ENCODE measurements at regions of chr11 and their contacts with region 1.

Region 1: GRCh38 chr11:8263769-8264410 is at the start of gene LMO1:
- DNase-seq: peak; percentile 20 to 60 (median 60)
- H3K4me3 ChIP-seq: peak within 1 kb of the TSS in 1 of 3 experiments; percentile 42
- H3K4me3 Mint-ChIP-seq: peak within 1 kb of the TSS; percentile 62 to 82
- H3K27ac ChIP-seq: no peak within 1 kb of the TSS
- H3K27ac Mint-ChIP-seq: peak within 1 kb of the TSS in 1 of 7 donors; percentile 42
- H3K4me1 ChIP-seq: peaks cover 17 to 27% of the 10 kb centered on the region in 2 donors
- H3K4me1 Mint-ChIP-seq: peaks cover 25% of the 10 kb centered on the region
- H3K27me3 ChIP-seq: peaks cover 47 to 82% of the 10 kb centered on the region in 2 donors
- H3K27me3 Mint-ChIP-seq: peaks cover 84 to 97% (median 88%) of the 10 kb centered on the region in 3 donors
- CTCF ChIP-seq: peak; percentile 85
- polyA plus RNA-seq, gene LMO1: not detected

Region 2: DNA sequence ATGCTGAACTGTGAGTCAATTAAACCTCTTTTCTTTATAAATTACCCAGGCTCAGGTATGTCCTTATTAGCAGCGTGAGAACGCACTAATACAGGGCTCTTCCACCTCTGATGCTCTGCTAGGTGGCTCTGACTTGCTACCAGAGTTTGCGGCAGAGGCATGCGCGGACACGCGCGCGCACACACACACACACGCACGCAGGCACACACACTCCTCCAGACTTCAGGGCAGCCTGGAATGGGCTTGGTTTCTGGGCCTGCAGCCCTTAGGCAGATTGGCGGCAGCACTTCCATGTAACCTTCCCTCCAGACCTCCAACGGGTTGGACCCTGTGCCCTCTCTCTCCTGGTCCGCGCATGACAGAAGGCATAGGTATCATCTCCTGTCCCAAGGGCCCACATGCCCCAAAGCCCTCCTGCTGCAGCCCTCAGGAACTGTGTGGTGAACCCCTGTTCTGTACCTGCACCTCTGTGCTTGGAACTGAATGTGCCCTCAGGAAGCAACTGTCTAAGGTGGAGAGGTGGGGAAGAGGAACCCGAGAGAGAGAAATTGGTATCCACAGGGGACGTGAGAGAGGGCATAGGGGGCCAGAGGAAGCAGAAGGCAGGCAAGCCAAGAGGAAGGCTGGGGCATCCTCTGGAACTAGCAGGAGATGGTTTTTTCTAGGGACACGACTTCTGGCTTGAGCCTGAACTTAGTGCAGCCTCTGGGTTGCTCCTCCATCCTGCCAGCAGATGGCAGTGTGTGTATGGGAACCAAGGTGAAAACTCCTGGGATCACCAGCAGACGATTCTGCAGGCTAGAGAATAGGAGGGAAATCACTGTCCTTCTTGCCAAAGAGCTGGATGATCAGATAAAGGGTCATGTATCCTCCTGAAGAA is 71.6 kb before region 1 on chr11:
- intact Hi-C with region 1: loop called in 1 of 2 experiments (anchors 10 kb)
- DNase-seq: peak; percentile 51 to 67 (median 65)
- H3K4me3 ChIP-seq: no peak overlapping the region
- H3K4me3 Mint-ChIP-seq: no peak overlapping the region
- H3K27ac ChIP-seq: no peak overlapping the region
- H3K27ac Mint-ChIP-seq: peak overlapping the region in 1 of 7 donors; percentile 62
- H3K4me1 ChIP-seq: peaks cover 38% of the 10 kb centered on the region in 2 donors
- H3K4me1 Mint-ChIP-seq: peaks cover 38% of the 10 kb centered on the region
- H3K27me3 ChIP-seq: no peaks in the 10 kb centered on the region
- H3K27me3 Mint-ChIP-seq: peaks cover 1 to 2% (median 2%) of the 10 kb centered on the region in 3 donors
- CTCF ChIP-seq: peak; percentile 88

Region 3: GRCh38 chr11:8225589-8226036 is 38.3 kb before region 1 on chr11:
- intact Hi-C with region 1: loop called in 1 of 2 experiments (anchors 5 kb)
- DNase-seq: peak; percentile 44 to 66 (median 66)
- H3K4me3 ChIP-seq: no peak overlapping the region
- H3K4me3 Mint-ChIP-seq: no peak overlapping the region
- H3K27ac ChIP-seq: no peak overlapping the region
- H3K27ac Mint-ChIP-seq: peak overlapping the region in 1 of 7 donors; percentile 21
- H3K4me1 ChIP-seq: peaks cover 4 to 13% of the 10 kb centered on the region in 2 donors
- H3K4me1 Mint-ChIP-seq: peaks cover 21% of the 10 kb centered on the region
- H3K27me3 ChIP-seq: no peaks in the 10 kb centered on the region
- H3K27me3 Mint-ChIP-seq: peaks cover 9 to 19% (median 11%) of the 10 kb centered on the region in 3 donors
- CTCF ChIP-seq: peak; percentile 99